A549 (cell line): ENCODE measurements at regions of chr16 and their contacts with region 1.

Region 1: DNA sequence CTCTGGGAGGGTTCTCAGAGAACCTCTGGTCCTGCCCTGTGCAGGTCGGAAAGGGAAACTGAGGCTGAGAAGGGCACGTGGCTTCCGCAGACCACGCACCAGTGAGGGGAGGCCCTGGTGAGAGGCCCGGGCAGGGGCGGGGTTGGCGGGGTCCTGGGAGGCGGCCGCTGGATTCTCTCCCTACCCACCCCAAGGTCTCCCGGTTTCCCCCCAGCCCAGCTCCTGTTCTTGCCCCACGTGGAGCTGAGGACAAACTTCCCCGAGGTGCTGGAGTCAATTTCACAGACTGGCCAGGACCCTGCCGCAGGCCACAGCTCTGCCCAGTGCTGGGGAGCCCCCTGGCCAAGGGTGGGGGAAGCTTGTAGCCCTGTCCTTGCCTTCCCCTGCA is 11.5 kb downstream of the CCL17 start:
- DNase-seq: no peak
- ATAC-seq: peak in 1 of 2 experiments; percentile 3; a peak in 1 of 6 replicates
- H3K4me3 ChIP-seq: no peak overlapping the region
- H3K27ac ChIP-seq: peak overlapping the region; percentile 75 to 92; a peak in 5 of 6 replicates
- H3K4me1 ChIP-seq: peaks cover 25% of the 10 kb centered on the region
- CTCF ChIP-seq: no peak
- EP300 ChIP-seq: no peak
- POLR2A ChIP-seq: no peak
- RAD21 ChIP-seq: no peak

Region 2: GRCh38 chr16:56749672-56750491 is 666.2 kb before region 1 on chr16:
- CTCF ChIA-PET with region 1: no interaction called
- POLR2A ChIA-PET with region 1: no interaction called
- DNase-seq: no peak
- ATAC-seq: no peak
- H3K4me3 ChIP-seq: no peak overlapping the region
- H3K27ac ChIP-seq: peak overlapping the region in 1 of 2 experiments; percentile 30; a peak in 1 of 6 replicates
- H3K4me1 ChIP-seq: peaks cover 7% of the 10 kb centered on the region; the same call in 2 of the 3 replicates
- CTCF ChIP-seq: no peak
- EP300 ChIP-seq: no peak
- POLR2A ChIP-seq: no peak
- RAD21 ChIP-seq: no peak

Region 3: DNA sequence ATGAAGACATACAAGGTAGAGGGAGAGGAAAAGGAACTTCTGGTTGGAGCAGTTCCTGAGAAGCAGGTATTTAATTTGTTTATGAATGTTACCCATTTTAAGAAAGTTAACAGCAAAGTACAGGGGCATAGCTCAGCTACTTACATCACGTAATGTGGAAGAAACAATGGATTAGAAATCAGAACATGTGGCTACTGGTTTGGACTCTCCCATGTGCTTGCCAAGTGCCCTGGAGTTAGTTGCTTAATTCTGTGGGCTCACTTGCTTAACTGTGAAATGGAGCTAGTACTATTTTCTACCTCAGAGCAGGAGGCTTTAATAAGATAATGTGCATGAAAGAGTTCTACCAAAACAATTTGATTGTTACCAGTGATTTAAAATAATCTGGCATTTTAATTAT is 202.7 kb before region 1 on chr16:
- CTCF ChIA-PET with region 1: no interaction called
- POLR2A ChIA-PET with region 1: no interaction called
- DNase-seq: no peak
- ATAC-seq: no peak
- H3K4me3 ChIP-seq: no peak overlapping the region
- H3K27ac ChIP-seq: no peak overlapping the region
- H3K4me1 ChIP-seq: no peaks in the 10 kb centered on the region
- CTCF ChIP-seq: no peak
- EP300 ChIP-seq: no peak
- POLR2A ChIP-seq: no peak
- RAD21 ChIP-seq: no peak

Region 4: GRCh38 chr16:57316390-57317017 is 99.6 kb before region 1 on chr16:
- CTCF ChIA-PET with region 1: interaction called, 709 read pairs
- POLR2A ChIA-PET with region 1: no interaction called
- DNase-seq: peak; percentile 47 to 68
- ATAC-seq: peak; percentile 69 to 78
- H3K4me3 ChIP-seq: no peak overlapping the region
- H3K27ac ChIP-seq: peak overlapping the region; percentile 74 to 85
- H3K4me1 ChIP-seq: peaks cover 40% of the 10 kb centered on the region
- CTCF ChIP-seq: no peak
- EP300 ChIP-seq: 0 out of 5 replicates have a peak, but pooled peaks of 1 of the 2 experiments have one; percentile 25
- POLR2A ChIP-seq: no peak
- RAD21 ChIP-seq: no peak

Region 5: DNA sequence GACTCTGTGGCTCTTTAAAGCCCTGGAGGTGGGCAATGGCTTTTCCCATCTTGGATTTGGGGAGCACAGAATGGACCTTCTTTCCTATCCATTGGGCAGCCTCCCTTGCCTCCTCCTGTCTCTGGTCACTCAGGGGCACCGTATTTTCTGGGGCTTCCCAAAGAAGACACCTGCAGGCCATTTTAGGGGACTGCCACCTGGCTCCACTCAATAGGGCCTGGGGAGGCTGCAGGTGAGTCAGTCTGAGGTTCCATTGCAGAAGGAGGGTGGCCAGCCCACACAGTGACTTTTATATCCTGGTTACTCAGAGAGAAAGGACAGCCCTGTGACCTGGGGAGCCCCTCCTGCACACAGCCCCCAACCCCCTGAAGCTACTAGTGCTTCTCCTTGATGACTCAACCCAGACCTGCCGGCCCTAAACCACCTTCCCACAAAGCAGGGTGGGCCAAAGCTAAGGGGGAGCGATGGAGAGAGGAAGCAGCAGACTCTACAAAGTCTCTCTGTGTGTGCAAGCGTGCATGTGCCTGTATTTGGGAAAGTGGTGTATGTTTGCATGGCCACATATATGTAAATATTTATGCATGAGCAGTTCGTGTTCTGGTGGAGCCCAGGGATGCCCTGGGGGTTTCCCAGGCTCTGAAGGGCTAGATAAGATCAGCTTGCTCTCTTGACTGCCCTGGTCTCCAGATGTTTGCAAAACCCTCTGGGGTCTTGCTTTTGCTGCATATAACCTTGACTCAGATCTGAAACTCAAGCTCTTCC is 38.9 kb before region 1 on chr16:
- CTCF ChIA-PET with region 1: interaction called, 43 read pairs
- POLR2A ChIA-PET with region 1: no interaction called
- DNase-seq: peak; percentile 61 to 62
- ATAC-seq: peak; percentile 40 to 42
- H3K4me3 ChIP-seq: no peak overlapping the region
- H3K27ac ChIP-seq: peak overlapping the region; percentile 69 to 83
- H3K4me1 ChIP-seq: peaks cover 66% of the 10 kb centered on the region
- CTCF ChIP-seq: no peak
- EP300 ChIP-seq: no peak
- POLR2A ChIP-seq: no peak
- RAD21 ChIP-seq: no peak

Region 6: DNA sequence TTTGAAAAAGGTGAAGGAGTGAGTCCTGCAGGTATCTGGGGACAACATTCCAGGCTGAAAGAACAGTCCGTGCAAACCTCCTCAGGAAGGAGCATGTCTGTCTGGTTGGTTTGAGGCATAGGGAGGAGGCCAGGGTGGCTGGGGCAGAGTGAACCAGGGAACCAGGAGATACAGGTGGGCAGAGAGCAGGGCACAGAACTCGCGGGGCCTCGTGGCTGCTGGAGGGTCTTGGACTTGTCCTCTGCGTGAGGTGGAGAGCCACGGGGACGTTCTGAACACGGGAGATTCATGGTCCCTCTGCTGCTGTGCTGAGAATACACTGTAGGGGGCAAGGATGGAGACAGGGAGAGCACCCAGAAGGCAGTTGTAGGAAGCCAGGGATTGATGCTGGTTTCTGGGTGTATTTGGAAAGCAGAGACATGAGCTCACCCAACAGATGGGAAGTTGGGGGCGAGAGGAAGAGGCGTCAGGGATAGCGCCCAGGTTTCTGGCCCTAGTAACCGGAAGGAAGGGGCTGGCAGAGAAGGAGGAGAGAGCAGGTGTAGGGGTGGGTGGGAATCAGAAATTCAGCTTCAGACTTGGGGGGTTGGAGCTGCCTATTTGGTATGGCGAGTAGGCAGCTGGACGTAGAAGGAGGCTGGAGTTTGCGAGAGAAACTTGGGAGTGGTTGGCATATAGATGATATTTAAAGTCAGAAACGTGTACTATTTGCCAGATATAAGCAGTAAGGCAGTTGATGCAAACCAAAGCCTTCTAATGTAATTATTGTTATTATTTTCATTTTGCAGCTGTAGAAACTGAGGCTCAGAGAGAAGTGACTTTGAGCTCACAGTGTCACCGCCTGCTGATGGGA is 11.9 kb before region 1 on chr16 and contains the start of gene CCL17:
- CTCF ChIA-PET with region 1: interaction called, 55 read pairs
- POLR2A ChIA-PET with region 1: interaction called, 3 read pairs
- DNase-seq: no peak
- ATAC-seq: peak; percentile 47 to 53; a peak in 3 of 6 replicates
- H3K4me3 ChIP-seq: no peak within 1 kb of the TSS
- H3K27ac ChIP-seq: no peak within 1 kb of the TSS
- H3K4me1 ChIP-seq: no peaks in the 10 kb centered on the region
- CTCF ChIP-seq: no peak
- EP300 ChIP-seq: no peak
- POLR2A ChIP-seq: no peak
- RAD21 ChIP-seq: no peak
- polyA plus RNA-seq, gene CCL17: not detected in 2 replicates

Region 7: DNA sequence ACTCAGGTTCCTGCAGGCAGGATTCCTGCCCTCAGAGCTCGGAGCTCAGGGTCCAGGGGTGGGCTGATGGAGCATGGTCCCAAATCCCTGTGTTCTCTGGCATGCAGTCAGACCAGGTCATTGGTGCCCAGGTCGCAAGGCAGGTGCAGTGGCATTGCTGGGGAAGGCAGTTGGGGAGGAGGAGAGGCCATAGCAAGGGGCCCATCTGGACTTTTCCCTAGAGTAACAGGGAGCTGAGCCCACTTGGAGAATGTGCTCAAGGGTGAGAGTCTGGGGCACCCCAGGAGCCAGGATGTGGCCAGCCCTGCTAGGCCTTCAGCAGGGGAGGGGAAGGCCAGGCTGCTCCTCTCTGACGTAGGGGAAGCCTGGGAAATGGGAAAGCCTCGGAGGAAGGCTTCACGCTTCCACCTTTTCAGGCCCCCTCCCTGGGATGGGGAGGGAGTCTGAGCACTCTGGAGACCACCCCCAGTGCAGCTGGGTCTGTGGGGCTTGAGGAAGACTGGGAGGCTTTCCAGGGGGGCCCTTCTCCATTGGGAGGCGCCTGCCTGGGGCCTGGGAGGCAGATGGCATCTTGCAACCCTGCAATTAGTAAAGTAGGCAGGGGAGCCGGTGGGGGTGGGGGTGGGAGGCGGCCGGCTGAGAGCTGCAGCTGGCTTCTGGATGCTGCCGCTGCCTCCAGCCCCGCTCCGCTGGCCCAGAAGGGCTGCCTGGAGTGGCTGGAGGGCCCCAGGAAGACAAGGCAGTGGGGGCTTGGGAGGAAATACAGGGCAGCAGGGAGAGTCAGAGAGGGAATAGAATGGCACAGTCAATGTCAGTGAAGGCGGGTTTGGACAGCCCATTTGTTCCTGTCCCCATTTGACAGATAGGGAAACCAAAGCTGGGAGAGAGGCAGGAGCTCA is 91.3 kb after region 1 on chr16:
- CTCF ChIA-PET with region 1: interaction called, 340 read pairs
- POLR2A ChIA-PET with region 1: no interaction called
- DNase-seq: no peak
- ATAC-seq: no peak
- H3K4me3 ChIP-seq: no peak overlapping the region
- H3K27ac ChIP-seq: peak overlapping the region in 1 of 2 experiments; percentile 54; a peak in 2 of 6 replicates
- H3K4me1 ChIP-seq: peaks cover 2% of the 10 kb centered on the region; the same call in 1 of the 3 replicates
- CTCF ChIP-seq: no peak
- EP300 ChIP-seq: no peak
- POLR2A ChIP-seq: no peak
- RAD21 ChIP-seq: no peak

Region 8: GRCh38 chr16:57585051-57585687 is 169.1 kb after region 1 on chr16:
- CTCF ChIA-PET with region 1: no interaction called
- POLR2A ChIA-PET with region 1: no interaction called
- DNase-seq: no peak
- ATAC-seq: no peak
- H3K4me3 ChIP-seq: no peak overlapping the region
- H3K27ac ChIP-seq: no peak overlapping the region
- H3K4me1 ChIP-seq: peaks cover 4% of the 10 kb centered on the region
- CTCF ChIP-seq: no peak
- EP300 ChIP-seq: no peak
- POLR2A ChIP-seq: no peak
- RAD21 ChIP-seq: no peak